Gastrocnemius medialis (tissue), 4 donors: ENCODE measurements at regions of chr7 and their contacts with region 1.

Region 1: GRCh38 chr7:23315366-23315765 is 16.2 kb downstream of the MALSU1 start:
- DNase-seq: no peak
- ATAC-seq: no peak
- H3K4me3 ChIP-seq: no peak overlapping the region
- H3K27ac ChIP-seq: peak overlapping the region in 3 of 4 donors; percentile 39 to 68 (median 62)
- H3K4me1 ChIP-seq: peaks cover 11 to 14% of the 10 kb centered on the region in 2 donors
- H3K27me3 ChIP-seq: no peaks in the 10 kb centered on the region
- CTCF ChIP-seq: no peak
- POLR2A ChIP-seq: no peak

Region 2: DNA sequence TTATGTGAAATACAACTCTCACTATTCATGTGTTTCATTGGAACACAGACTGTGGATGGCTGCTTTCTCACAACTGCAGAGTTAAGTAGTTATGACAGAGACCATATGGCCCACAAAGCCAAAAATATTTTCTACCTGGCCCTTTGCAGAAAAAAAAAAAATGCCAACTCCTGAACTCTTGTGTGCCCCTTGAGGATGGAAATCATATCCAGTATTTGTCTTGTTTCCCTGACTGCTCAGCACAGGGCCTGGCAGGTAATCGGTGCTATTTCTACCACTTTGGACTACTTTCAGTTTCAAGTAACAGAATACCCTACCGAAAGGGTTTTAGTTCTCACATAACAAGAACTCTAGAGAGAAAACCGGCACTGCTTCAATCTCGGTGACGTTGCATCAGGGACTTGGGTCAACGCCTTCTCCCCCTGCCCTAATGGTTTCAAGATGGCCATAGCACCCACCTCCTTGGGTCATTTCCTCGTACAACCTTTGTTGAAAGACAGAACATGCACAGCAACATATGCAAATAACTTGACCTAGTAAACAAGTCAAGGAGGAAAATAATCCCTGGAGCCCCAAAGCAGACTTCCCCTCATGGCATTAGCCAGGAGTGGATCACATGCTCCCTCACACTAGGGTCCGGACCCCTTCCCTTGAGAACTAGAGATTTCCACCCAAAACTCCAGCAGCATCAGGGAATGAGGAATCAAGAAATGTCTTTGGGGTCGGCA is 80.6 kb before region 1 on chr7:
- in situ Hi-C with region 1: no loop called
- intact Hi-C with region 1: no loop called
- DNase-seq: no peak
- ATAC-seq: peak; percentile 42 to 63
- H3K4me3 ChIP-seq: peak overlapping the region in 2 of 4 donors; percentile 19 to 30
- H3K27ac ChIP-seq: peak overlapping the region; percentile 1 to 32 (median 10)
- H3K4me1 ChIP-seq: peaks cover 6 to 10% of the 10 kb centered on the region in 2 donors
- H3K27me3 ChIP-seq: no peaks in the 10 kb centered on the region
- CTCF ChIP-seq: no peak
- POLR2A ChIP-seq: no peak

Region 3: GRCh38 chr7:23279819-23280525 is 35.4 kb before region 1 on chr7:
- in situ Hi-C with region 1: no loop called
- intact Hi-C with region 1: loop called (anchors 2 kb)
- DNase-seq: no peak
- ATAC-seq: peak; percentile 60 to 91
- H3K4me3 ChIP-seq: no peak overlapping the region
- H3K27ac ChIP-seq: peak overlapping the region; percentile 16 to 77 (median 38)
- H3K4me1 ChIP-seq: peaks cover 9 to 11% of the 10 kb centered on the region in 2 donors
- H3K27me3 ChIP-seq: no peaks in the 10 kb centered on the region
- CTCF ChIP-seq: no peak
- POLR2A ChIP-seq: no peak

Region 4: DNA sequence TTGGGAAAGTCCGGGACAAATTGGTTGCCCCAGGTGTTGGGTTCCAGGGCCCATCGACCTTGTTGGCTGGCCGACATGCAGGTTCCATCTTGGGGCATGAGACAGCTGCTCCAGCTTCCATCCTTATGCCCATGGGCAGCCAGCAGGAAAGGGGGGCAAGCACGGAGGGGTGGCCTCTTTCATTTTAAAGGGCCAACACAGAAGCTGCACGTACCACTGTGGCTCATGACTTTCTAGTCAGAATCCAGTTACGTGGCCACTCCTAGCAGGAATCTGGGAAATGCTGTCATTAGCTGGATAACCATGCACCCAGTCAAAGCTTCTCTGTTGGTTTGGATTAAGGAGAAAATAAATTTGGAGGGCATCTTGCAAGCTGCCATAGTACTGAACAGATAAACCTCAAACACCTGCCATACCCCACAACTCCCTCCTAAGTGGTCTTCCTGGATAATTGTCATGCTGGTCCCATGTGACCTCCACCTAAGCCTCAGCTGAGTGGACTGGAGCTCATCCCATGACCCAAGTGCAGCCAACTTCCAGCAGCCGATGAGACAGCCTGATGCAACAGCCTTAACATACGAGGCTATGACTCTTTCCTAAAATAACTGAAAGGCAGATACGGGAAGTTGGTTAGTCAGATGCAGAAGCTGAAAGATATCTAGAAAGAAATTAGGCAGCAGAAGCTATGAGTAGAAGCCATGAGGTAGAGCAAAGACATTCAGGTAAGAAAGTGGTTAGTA is 1463.3 kb after region 1 on chr7:
- in situ Hi-C with region 1: no loop called
- intact Hi-C with region 1: no loop called
- DNase-seq: peak; percentile 63 to 84
- ATAC-seq: peak; percentile 98 to 99
- H3K4me3 ChIP-seq: no peak overlapping the region
- H3K27ac ChIP-seq: peak overlapping the region; percentile 77 to 85 (median 82)
- H3K4me1 ChIP-seq: peaks cover 15 to 18% of the 10 kb centered on the region in 2 donors
- H3K27me3 ChIP-seq: no peaks in the 10 kb centered on the region
- CTCF ChIP-seq: no peak
- POLR2A ChIP-seq: peak; percentile 28 to 40